CD8-positive, alpha-beta T cell (primary cell): ENCODE measurements at regions of chr9 and their contacts with region 1.

Region 1: DNA sequence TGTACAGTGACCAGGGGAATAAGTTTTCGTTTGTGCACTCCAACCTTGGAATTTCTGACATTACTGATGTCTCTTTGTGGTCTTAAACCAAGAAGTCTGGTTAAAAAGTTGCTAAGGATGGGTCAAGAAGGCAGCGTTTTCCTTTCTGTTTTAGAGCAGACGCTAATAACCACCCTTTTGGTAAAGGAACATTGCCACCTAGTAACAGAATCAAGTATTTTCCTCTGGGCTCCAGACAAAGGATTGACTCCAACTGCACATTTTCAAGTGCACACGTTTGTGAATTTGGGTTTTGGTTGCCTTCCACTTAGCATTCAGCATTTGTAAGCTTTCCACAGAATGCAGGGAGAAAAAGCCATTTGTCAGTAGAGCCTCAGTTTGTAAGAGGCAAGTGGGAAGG is 22.2 kb upstream of the CEP78 start:
- DNase-seq: peak in 2 of 9 experiments; percentile 56 to 68
- ATAC-seq: peak; percentile 50
- H3K4me3 ChIP-seq: no peak overlapping the region
- H3K4me3 Mint-ChIP-seq: no peak overlapping the region
- H3K27ac ChIP-seq: no peak overlapping the region
- H3K27ac Mint-ChIP-seq: no peak overlapping the region
- H3K4me1 ChIP-seq: peaks cover 40% of the 10 kb centered on the region
- H3K4me1 Mint-ChIP-seq: peaks cover 42% of the 10 kb centered on the region
- H3K27me3 ChIP-seq: no peaks in the 10 kb centered on the region
- H3K27me3 Mint-ChIP-seq: no peaks in the 10 kb centered on the region
- CTCF ChIP-seq: peak; percentile 49

Region 2: GRCh38 chr9:77433675-77434445 is 779.9 kb before region 1 on chr9:
- CTCF ChIA-PET with region 1: interaction called, 7 read pairs
- POLR2A ChIA-PET with region 1: no interaction called
- intact Hi-C with region 1: loop called (anchors 2 to 5 kb)
- DNase-seq: peak in 7 of 9 experiments; percentile 9 to 59 (median 46)
- ATAC-seq: peak; percentile 70
- H3K4me3 ChIP-seq: no peak overlapping the region
- H3K4me3 Mint-ChIP-seq: no peak overlapping the region
- H3K27ac ChIP-seq: no peak overlapping the region
- H3K27ac Mint-ChIP-seq: no peak overlapping the region
- H3K4me1 ChIP-seq: no peaks in the 10 kb centered on the region
- H3K4me1 Mint-ChIP-seq: peaks cover 2% of the 10 kb centered on the region
- H3K27me3 ChIP-seq: no peaks in the 10 kb centered on the region
- H3K27me3 Mint-ChIP-seq: peaks cover 8% of the 10 kb centered on the region
- CTCF ChIP-seq: peak; percentile 88

Region 3: GRCh38 chr9:77977210-77977611 is 236.5 kb before region 1 on chr9:
- CTCF ChIA-PET with region 1: interaction called, 35 read pairs
- POLR2A ChIA-PET with region 1: no interaction called
- intact Hi-C with region 1: loop called (anchors 1 to 10 kb)
- DNase-seq: peak in 8 of 9 experiments; percentile 19 to 73 (median 45)
- ATAC-seq: peak; percentile 53
- H3K4me3 ChIP-seq: no peak overlapping the region
- H3K4me3 Mint-ChIP-seq: peak overlapping the region; percentile 60
- H3K27ac ChIP-seq: peak overlapping the region in 1 of 2 experiments; percentile 68
- H3K27ac Mint-ChIP-seq: peak overlapping the region; percentile 78
- H3K4me1 ChIP-seq: peaks cover 48% of the 10 kb centered on the region
- H3K4me1 Mint-ChIP-seq: peaks cover 54% of the 10 kb centered on the region
- H3K27me3 ChIP-seq: no peaks in the 10 kb centered on the region
- H3K27me3 Mint-ChIP-seq: no peaks in the 10 kb centered on the region
- CTCF ChIP-seq: no peak

Region 4: DNA sequence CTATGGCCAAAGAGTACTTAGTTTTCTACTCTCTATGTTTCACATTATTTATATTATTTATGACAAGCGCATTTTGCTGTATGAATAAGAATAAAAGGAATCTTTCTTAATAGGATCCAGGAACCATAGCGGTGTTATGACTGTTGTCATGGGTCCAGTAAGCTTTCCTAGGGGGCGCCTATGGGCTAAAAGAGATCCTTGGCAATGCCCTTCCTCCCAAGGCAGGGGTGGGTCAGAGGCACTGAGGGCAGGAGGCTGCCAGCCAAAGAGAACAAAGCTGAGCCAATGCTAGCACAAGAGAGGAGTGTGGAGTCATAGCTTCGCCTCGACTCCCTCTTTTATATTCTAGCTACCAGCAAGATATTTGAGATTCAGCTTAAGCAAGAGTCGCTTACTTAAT is 83.7 kb before region 1 on chr9:
- CTCF ChIA-PET with region 1: interaction called, 3 read pairs
- POLR2A ChIA-PET with region 1: no interaction called
- intact Hi-C with region 1: loop called (anchors 5 kb)
- DNase-seq: no peak
- ATAC-seq: no peak
- H3K4me3 ChIP-seq: no peak overlapping the region
- H3K4me3 Mint-ChIP-seq: no peak overlapping the region
- H3K27ac ChIP-seq: no peak overlapping the region
- H3K27ac Mint-ChIP-seq: no peak overlapping the region
- H3K4me1 ChIP-seq: peaks cover 13% of the 10 kb centered on the region
- H3K4me1 Mint-ChIP-seq: peaks cover 10% of the 10 kb centered on the region
- H3K27me3 ChIP-seq: no peaks in the 10 kb centered on the region
- H3K27me3 Mint-ChIP-seq: peaks cover 2% of the 10 kb centered on the region
- CTCF ChIP-seq: no peak

Region 5: GRCh38 chr9:78235756-78236538 is 22.2 kb after region 1 on chr9 and contains the start of gene CEP78:
- CTCF ChIA-PET with region 1: interaction called, 3 read pairs
- POLR2A ChIA-PET with region 1: interaction called, 3 read pairs
- intact Hi-C with region 1: loop called in 1 of 2 experiments (anchors 1 kb)
- DNase-seq: peak; percentile 71 to 95 (median 87)
- ATAC-seq: peak; percentile 97
- H3K4me3 ChIP-seq: peak within 1 kb of the TSS; percentile 90 to 91
- H3K4me3 Mint-ChIP-seq: no peak within 1 kb of the TSS
- H3K27ac ChIP-seq: peak within 1 kb of the TSS; percentile 83 to 87
- H3K27ac Mint-ChIP-seq: peak within 1 kb of the TSS; percentile 93
- H3K4me1 ChIP-seq: peaks cover 33% of the 10 kb centered on the region
- H3K4me1 Mint-ChIP-seq: peaks cover 36% of the 10 kb centered on the region
- H3K27me3 ChIP-seq: no peaks in the 10 kb centered on the region
- H3K27me3 Mint-ChIP-seq: no peaks in the 10 kb centered on the region
- CTCF ChIP-seq: no peak
- total RNA-seq, gene CEP78: 17.7 to 18.5 TPM

Region 6: GRCh38 chr9:78407636-78408312 is 194.1 kb after region 1 on chr9:
- CTCF ChIA-PET with region 1: no interaction called
- POLR2A ChIA-PET with region 1: no interaction called
- intact Hi-C with region 1: no loop called
- DNase-seq: no peak
- ATAC-seq: no peak
- H3K4me3 ChIP-seq: no peak overlapping the region
- H3K4me3 Mint-ChIP-seq: no peak overlapping the region
- H3K27ac ChIP-seq: no peak overlapping the region
- H3K27ac Mint-ChIP-seq: no peak overlapping the region
- H3K4me1 ChIP-seq: no peaks in the 10 kb centered on the region
- H3K4me1 Mint-ChIP-seq: no peaks in the 10 kb centered on the region
- H3K27me3 ChIP-seq: no peaks in the 10 kb centered on the region
- H3K27me3 Mint-ChIP-seq: peaks cover 5% of the 10 kb centered on the region
- CTCF ChIP-seq: no peak